Head of caudate nucleus (tissue), 42 donors: ENCODE measurements at regions of chr19 and their contacts with region 1.

Region 1: GRCh38 chr19:57320180-57321084 is at the start of gene ZNF543:
- DNase-seq: peak; percentile 94 to 99 (median 98)

Region 2: GRCh38 chr19:57103573-57104277 is 216.7 kb before region 1 on chr19:
- intact Hi-C with region 1: no loop called
- DNase-seq: peak; percentile 54 to 91 (median 78)

Region 3: DNA sequence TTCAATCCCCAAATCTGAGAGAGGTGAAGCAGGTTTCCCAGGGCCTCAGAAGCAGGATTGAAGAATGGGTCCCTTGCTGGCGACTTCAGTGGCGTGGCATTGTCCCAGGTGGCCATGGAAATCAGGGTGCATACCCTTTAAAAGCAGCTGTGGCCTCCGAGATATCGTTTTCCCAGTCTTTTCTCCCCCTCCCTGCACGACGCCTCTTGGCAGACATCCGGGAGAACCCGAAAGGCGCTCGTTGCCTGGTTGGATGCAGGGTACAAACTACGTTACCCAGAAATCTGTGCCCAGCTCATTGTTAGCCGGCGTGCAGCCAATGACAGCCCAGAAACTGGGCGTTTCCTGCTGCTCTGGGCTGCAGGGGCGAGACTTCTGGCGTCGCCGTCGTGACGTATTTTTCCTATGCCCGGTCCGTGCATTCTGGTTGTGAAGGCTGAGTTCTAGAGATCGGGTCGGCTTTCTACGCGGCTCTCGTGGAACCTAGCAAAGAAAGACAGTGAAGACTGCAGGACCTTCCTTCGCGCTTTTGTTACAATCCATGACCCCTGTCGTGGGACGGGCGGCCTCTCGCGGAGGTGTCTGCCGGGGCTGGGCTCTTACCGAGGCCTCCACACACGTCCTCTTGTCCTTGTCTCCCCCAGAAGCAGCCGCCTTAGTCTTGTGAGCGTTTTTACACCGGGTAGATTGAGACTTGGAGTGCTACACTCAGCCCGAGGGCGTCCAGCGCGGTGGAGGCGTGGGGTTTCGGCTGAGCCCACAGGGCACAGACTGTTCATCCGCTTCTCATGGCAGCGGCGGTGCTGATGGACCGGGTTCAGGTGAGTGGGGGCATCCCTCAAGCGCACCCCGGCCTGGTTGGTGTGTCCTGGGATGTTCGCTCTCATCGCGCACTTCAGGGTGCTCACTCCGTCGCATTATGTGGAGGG is 30.7 kb after region 1 on chr19 and contains the start of gene ZNF304:
- intact Hi-C with region 1: loop called (anchors 5 kb)
- DNase-seq: peak; percentile 89 to 99 (median 97)

Region 4: GRCh38 chr19:57362997-57363705 is 42.7 kb after region 1 on chr19 and contains the starts of genes TRAPPC2B and ZNF547:
- intact Hi-C with region 1: loop called (anchors 5 kb)
- DNase-seq: peak; percentile 96 to 100 (median 99)